Endothelial cell of umbilical vein (primary cell): ENCODE measurements at regions of chr10 and their contacts with region 1.

Region 1: DNA sequence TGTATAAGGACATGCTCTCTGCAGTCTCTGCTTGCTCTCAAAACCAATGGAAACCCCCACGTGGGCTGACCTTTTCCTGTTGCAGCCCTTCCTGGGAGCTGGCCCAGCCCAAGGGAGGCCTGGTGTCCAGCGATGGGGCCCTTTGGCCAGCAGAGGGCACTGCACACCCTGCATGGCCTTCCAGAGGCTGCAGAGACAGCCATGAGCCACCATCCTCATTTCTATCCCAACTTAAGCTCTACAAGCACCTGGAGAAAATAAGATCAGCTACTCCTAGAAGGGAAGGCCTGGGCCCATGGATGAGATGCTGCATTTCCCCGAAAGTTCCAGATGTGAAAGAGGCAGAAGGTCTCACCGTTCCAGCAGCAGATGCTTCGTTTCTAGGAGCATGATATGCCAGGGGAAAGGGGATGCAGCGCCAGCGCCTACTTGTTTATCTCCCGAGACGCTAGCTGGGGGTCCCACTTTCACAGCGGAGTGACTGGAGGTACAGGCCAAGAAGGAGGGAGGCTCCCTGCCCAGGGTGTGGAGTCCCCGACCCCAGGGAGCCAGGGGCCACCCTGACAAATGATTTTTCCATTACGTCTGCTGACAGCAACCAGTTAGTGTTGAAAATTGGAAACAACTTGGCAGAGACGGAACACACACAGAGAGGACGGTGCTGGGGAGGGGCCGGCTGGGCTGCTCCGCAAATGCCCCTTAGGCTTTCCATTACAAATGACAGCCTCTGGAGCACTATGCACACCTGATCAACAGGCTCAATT is 106.4 kb downstream of the ZRANB1 start:
- DNase-seq: peak; percentile 84
- H3K4me3 ChIP-seq: no peak overlapping the region
- H3K27ac ChIP-seq: peak overlapping the region; percentile 8
- H3K4me1 ChIP-seq: peaks cover 26% of the 10 kb centered on the region
- H3K27me3 ChIP-seq: no peaks in the 10 kb centered on the region
- CTCF ChIP-seq: peak; percentile 94 to 97
- POLR2A ChIP-seq: no peak

Region 2: GRCh38 chr10:124916585-124917427 is 131.5 kb before region 1 on chr10:
- CTCF ChIA-PET with region 1: no interaction called
- POLR2A ChIA-PET with region 1: no interaction called
- dilution Hi-C with region 1: no loop called
- intact Hi-C with region 1: no loop called
- DNase-seq: peak; percentile 97
- H3K4me3 ChIP-seq: peak overlapping the region; percentile 89 to 96 (median 92)
- H3K27ac ChIP-seq: peak overlapping the region; percentile 83
- H3K4me1 ChIP-seq: peaks cover 16% of the 10 kb centered on the region
- H3K27me3 ChIP-seq: no peaks in the 10 kb centered on the region
- CTCF ChIP-seq: no peak
- POLR2A ChIP-seq: peak; percentile 96

Region 3: DNA sequence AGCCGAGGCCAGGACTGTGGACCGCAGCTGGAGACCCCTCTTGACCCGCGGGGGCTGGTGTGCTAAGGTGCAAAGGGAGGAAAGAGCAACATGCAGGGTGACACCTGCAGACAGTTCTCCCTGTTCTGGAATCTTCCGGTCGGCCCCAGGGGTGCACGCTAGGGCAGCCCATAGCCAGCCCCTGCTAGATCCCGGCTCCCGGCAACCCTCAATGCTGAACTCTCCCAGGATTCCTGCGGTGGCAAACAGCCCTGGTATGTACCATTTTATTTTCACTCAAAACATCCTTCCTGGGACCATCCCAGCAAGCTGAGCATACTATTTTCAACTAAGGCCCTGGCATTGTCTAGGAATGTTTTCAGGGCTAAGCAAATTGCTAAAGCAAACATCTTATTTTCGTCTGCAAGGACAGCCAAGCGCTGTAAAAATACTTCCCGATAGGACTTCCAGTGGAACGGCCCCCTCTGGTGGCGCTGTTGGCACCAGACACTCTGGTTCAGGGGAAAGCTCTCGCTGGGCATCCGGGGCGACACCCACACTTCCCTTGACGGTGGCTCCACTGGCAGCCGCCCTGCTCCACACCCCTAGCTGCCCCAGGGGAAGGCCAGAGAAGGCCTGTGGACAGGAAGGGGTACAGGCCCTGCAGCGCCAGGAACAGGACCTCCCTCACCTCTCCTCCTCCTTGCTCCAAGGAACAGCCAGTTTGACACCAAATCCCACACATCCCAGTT is 12.7 kb after region 1 on chr10:
- CTCF ChIA-PET with region 1: interaction called, 159 read pairs
- POLR2A ChIA-PET with region 1: interaction called, 7 read pairs
- dilution Hi-C with region 1: no loop called
- intact Hi-C with region 1: loop called (anchors 1 kb)
- DNase-seq: peak; percentile 80
- H3K4me3 ChIP-seq: no peak overlapping the region
- H3K27ac ChIP-seq: peak overlapping the region; percentile 44
- H3K4me1 ChIP-seq: peaks cover 57% of the 10 kb centered on the region
- H3K27me3 ChIP-seq: no peaks in the 10 kb centered on the region
- CTCF ChIP-seq: peak; percentile 82 to 90
- POLR2A ChIP-seq: no peak

Region 4: DNA sequence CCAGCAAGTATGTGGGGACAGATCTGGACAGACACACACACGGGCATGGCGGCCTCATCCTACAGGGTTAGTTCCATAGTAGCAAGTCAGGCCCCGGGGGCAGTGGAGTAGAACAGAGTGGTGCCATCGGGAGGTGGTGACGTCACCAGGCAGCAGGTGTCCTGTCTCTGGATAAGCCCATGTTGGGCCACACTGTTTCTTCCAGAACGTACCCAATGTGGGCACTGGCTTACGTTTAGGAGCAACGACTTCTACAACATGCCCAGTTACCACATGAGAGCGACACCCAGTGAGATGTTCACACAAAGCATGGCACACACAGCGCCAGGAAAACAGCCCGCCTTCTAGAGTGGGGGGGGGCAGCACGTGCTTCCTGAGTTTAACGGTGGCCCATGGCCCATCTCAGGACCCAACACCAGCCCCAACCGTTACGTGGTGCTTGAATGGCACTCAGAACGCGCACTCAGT is 44.3 kb after region 1 on chr10:
- CTCF ChIA-PET with region 1: interaction called, 17 read pairs
- POLR2A ChIA-PET with region 1: no interaction called
- dilution Hi-C with region 1: no loop called
- intact Hi-C with region 1: no loop called
- DNase-seq: no peak
- H3K4me3 ChIP-seq: no peak overlapping the region
- H3K27ac ChIP-seq: no peak overlapping the region
- H3K4me1 ChIP-seq: peaks cover 5% of the 10 kb centered on the region
- H3K27me3 ChIP-seq: no peaks in the 10 kb centered on the region
- CTCF ChIP-seq: no peak
- POLR2A ChIP-seq: no peak

Region 5: GRCh38 chr10:125152450-125153368 is 104.4 kb after region 1 on chr10:
- CTCF ChIA-PET with region 1: interaction called, 15 read pairs
- POLR2A ChIA-PET with region 1: no interaction called
- dilution Hi-C with region 1: no loop called
- intact Hi-C with region 1: loop called (anchors 5 kb)
- DNase-seq: peak; percentile 65
- H3K4me3 ChIP-seq: no peak overlapping the region
- H3K27ac ChIP-seq: peak overlapping the region; percentile 22
- H3K4me1 ChIP-seq: peaks cover 80% of the 10 kb centered on the region
- H3K27me3 ChIP-seq: no peaks in the 10 kb centered on the region
- CTCF ChIP-seq: no peak
- POLR2A ChIP-seq: no peak

Region 6: DNA sequence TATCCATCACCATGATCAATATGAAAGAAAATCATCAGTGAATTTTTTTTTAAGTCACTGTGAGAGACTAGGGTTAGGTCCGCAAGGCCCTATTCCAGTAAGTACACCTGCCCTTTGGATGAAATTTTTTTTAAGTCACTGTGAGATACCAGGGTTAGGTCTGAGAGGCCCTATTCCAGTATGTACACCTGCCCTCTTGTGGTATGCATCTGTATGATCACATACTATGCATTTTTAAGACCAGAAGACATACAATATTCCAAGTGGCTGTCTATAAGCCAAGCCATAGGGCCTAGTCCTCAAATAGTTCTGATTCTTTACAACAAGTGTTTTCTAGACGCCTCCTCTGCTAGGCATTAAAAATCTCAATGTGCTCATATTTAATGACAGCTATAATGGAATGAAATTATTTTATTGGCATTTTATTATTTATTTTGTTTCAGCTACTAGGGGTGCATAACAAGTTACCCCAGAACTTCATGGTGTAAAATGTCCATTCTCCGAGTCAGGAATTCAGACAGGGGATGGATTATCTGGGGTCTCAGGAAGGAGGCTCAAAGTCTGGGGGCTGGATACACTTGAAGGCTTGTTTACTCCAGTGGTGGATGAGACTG is 581.6 kb after region 1 on chr10:
- CTCF ChIA-PET with region 1: interaction called, 8 read pairs
- POLR2A ChIA-PET with region 1: no interaction called
- dilution Hi-C with region 1: no loop called
- intact Hi-C with region 1: loop called (anchors 5 kb)
- DNase-seq: peak; percentile 81
- H3K4me3 ChIP-seq: no peak overlapping the region
- H3K27ac ChIP-seq: no peak overlapping the region
- H3K4me1 ChIP-seq: peaks cover 20% of the 10 kb centered on the region
- H3K27me3 ChIP-seq: no peaks in the 10 kb centered on the region
- CTCF ChIP-seq: peak; percentile 51 to 67
- POLR2A ChIP-seq: no peak